CD14-positive monocyte (primary cell): ENCODE measurements at regions of chr2 and their contacts with region 1.

Region 1: DNA sequence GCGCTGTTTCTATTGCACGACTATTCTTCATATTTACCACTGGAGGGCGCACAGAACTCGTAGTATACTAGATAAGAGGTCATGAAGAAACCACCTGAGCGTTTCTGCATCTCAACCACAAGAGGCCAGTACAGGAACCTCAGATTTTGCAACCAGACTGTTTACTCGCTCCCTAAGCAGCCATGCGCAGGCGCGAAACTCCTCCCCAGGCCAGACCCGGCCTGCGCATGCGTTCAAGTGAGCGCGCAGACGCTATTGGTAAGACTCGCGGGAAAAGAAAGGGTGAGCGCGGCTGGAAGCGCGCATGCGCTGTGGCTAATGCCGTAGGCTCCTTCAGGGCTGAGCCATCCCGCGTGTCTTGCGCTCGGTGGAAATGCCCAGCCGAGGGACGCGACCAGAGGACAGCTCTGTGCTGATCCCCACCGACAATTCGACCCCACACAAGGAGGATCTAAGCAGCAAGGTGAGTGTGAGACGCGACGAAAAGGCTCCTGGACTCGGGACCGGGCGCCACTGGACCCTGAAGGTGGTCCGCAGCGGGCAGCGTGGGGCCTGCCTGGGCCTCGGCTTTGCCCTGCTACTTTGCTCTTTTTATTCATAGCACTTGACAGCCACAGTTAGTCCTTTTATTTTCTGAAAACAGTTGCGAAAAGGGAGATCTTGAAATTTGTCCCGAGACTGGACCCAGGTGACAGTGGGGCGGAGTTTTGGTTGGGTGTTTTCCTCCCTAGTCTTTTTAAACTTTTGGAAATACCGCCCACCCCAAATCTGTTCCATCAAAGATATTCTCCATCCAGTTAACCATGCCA is at the start of gene ASNSD1:
- DNase-seq: peak; percentile 100
- H3K4me3 ChIP-seq: peak within 1 kb of the TSS; percentile 85 to 100 (median 92)
- H3K4me3 Mint-ChIP-seq: no peak within 1 kb of the TSS
- H3K27ac ChIP-seq: peak within 1 kb of the TSS; percentile 84 to 93
- H3K27ac Mint-ChIP-seq: no peak within 1 kb of the TSS
- H3K4me1 ChIP-seq: peaks cover 32 to 34% of the 10 kb centered on the region in 2 donors
- H3K4me1 Mint-ChIP-seq: peaks cover 27% of the 10 kb centered on the region
- H3K27me3 ChIP-seq: no peaks in the 10 kb centered on the region
- H3K27me3 Mint-ChIP-seq: no peaks in the 10 kb centered on the region
- CTCF ChIP-seq: peak; percentile 97
- polyA plus RNA-seq, gene ASNSD1: 8.6 to 27.1 (median 26.6) TPM

Region 2: GRCh38 chr2:189440947-189441708 is 220.2 kb before region 1 on chr2 and contains the start of gene WDR75:
- intact Hi-C with region 1: loop called in 1 of 2 experiments (anchors 5 kb)
- DNase-seq: peak; percentile 89 to 92 (median 91)
- H3K4me3 ChIP-seq: peak within 1 kb of the TSS; percentile 71 to 87 (median 80)
- H3K4me3 Mint-ChIP-seq: peak within 1 kb of the TSS; percentile 98 to 99
- H3K27ac ChIP-seq: peak within 1 kb of the TSS; percentile 97
- H3K27ac Mint-ChIP-seq: peak within 1 kb of the TSS; percentile 97 to 100 (median 99)
- H3K4me1 ChIP-seq: peaks cover 12 to 34% of the 10 kb centered on the region in 2 donors
- H3K4me1 Mint-ChIP-seq: peaks cover 15% of the 10 kb centered on the region
- H3K27me3 ChIP-seq: no peaks in the 10 kb centered on the region
- H3K27me3 Mint-ChIP-seq: peaks cover 0 to 3% (median 0%) of the 10 kb centered on the region in 3 donors
- CTCF ChIP-seq: no peak
- polyA plus RNA-seq, gene WDR75: 3.9 to 20.7 (median 5.8) TPM

Region 3: DNA sequence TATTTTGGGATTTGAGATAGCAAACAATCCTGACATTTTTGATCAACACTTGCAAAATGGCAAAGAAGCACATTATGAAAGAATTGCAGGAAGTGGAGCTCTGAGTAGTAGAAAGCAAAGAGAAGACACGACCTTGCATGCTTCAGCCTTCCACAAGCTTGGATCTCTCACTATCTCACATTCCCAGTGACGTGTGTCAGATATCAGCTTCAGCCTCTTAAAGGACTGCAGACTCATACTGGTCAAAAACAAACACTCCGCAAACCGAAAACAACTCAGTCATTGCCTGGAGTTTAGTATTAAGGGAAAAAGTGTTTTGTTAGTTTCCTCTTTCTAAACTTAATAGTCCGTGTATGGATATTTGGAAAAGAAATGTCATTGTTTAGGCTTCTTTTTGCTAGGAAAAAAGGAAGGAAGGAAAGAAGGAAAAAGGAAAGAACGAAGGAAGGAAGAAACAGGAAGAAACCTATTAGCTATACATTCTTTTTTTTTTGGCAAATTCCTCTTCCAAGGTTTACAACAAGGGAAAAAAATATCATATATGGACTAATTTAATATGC is 48.2 kb before region 1 on chr2:
- intact Hi-C with region 1: no loop called
- DNase-seq: peak in 2 of 3 donors; percentile 2 to 6
- H3K4me3 ChIP-seq: peak overlapping the region; percentile 7 to 67 (median 45)
- H3K4me3 Mint-ChIP-seq: peak overlapping the region; percentile 56 to 86
- H3K27ac ChIP-seq: no peak overlapping the region
- H3K27ac Mint-ChIP-seq: peak overlapping the region in 1 of 7 donors; percentile 37
- H3K4me1 ChIP-seq: peaks cover 4 to 9% of the 10 kb centered on the region in 2 donors
- H3K4me1 Mint-ChIP-seq: peaks cover 6% of the 10 kb centered on the region
- H3K27me3 ChIP-seq: no peaks in the 10 kb centered on the region
- H3K27me3 Mint-ChIP-seq: peaks cover 0 to 2% (median 0%) of the 10 kb centered on the region in 3 donors
- CTCF ChIP-seq: no peak

Region 4: GRCh38 chr2:189698020-189698887 is 36.9 kb after region 1 on chr2:
- intact Hi-C with region 1: loop called in 1 of 2 experiments (anchors 5 kb)
- DNase-seq: peak; percentile 21 to 72 (median 43)
- H3K4me3 ChIP-seq: no peak overlapping the region
- H3K4me3 Mint-ChIP-seq: peak overlapping the region in 1 of 2 donors; percentile 11
- H3K27ac ChIP-seq: no peak overlapping the region
- H3K27ac Mint-ChIP-seq: no peak overlapping the region
- H3K4me1 ChIP-seq: no peaks in the 10 kb centered on the region
- H3K4me1 Mint-ChIP-seq: peaks cover 2% of the 10 kb centered on the region
- H3K27me3 ChIP-seq: no peaks in the 10 kb centered on the region
- H3K27me3 Mint-ChIP-seq: no peaks in the 10 kb centered on the region
- CTCF ChIP-seq: peak; percentile 89

Region 5: DNA sequence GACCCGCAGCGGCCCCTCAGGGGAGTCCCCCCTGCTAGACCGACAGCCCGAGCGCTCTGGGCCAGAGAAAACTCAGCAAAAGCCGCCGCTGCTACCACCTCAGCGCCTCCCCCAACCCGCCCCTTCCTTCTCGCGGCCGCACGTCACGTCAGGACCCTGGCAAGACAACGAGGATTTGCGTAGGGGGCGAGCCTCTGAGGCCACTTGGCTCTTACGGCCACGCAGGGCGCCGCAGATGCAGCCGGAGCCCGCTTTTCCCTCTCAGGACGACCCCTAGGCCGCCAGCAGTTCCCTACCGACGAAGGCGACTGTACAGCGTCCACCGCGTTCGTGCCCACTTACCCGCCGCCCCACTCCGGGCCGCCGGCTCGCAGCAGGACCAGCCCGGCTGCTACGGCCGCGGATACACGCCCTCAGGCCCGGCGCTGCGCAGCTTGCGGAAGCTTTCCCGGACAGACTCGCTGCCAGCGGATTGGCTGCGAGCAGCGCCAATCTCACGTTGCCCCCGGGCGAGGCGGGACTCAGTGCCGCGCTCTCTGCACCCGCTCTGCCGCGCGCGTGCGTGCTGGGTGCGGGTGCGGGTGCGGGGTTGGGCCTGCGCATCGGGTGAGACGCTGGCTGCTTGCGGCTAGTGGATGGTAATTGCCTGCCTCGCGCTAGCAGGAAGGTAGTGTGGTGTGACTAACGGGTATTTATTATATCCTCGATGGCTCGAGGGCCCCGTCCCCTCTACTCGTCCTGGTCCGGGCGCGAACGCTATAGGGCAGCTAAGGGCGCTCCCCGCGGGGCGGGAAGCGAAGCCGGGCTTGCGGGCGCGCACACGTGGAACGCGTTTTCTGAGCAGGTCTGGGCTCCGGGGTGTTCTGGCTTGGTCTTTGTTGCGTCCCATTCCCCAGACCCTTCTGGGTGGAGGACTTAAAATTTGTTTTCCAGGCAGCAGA is 122.8 kb after region 1 on chr2 and contains the starts of genes ORMDL1 and PMS1:
- intact Hi-C with region 1: loop called in 1 of 2 experiments (anchors 10 kb)
- DNase-seq: peak; percentile 93
- H3K4me3 ChIP-seq: peak within 1 kb of the TSS; percentile 78 to 89 (median 85)
- H3K4me3 Mint-ChIP-seq: peak within 1 kb of the TSS; percentile 90 to 94
- H3K27ac ChIP-seq: peak within 1 kb of the TSS; percentile 81 to 90
- H3K27ac Mint-ChIP-seq: peak within 1 kb of the TSS; percentile 89 to 97 (median 94)
- H3K4me1 ChIP-seq: peaks cover 28 to 33% of the 10 kb centered on the region in 2 donors
- H3K4me1 Mint-ChIP-seq: peaks cover 36% of the 10 kb centered on the region
- H3K27me3 ChIP-seq: no peaks in the 10 kb centered on the region
- H3K27me3 Mint-ChIP-seq: no peaks in the 10 kb centered on the region
- CTCF ChIP-seq: no peak
- polyA plus RNA-seq, gene ORMDL1: 76.4 to 204 (median 93.2) TPM
- polyA plus RNA-seq, gene PMS1: 3.7 to 7.8 (median 5.7) TPM